Endothelial cell of umbilical vein (primary cell): ENCODE measurements at regions of chr5 and their contacts with region 1.

Region 1: GRCh38 chr5:80672140-80672736 is 17.5 kb upstream of the DHFR start:
- DNase-seq: peak; percentile 69
- H3K4me3 ChIP-seq: no peak overlapping the region
- H3K27ac ChIP-seq: no peak overlapping the region
- H3K4me1 ChIP-seq: no peaks in the 10 kb centered on the region
- H3K27me3 ChIP-seq: no peaks in the 10 kb centered on the region
- CTCF ChIP-seq: peak; percentile 70
- POLR2A ChIP-seq: no peak

Region 2: GRCh38 chr5:79284846-79285245 is 1387.4 kb before region 1 on chr5:
- CTCF ChIA-PET with region 1: no interaction called
- POLR2A ChIA-PET with region 1: no interaction called
- dilution Hi-C with region 1: no loop called
- intact Hi-C with region 1: no loop called
- DNase-seq: no peak
- H3K4me3 ChIP-seq: no peak overlapping the region
- H3K27ac ChIP-seq: no peak overlapping the region
- H3K4me1 ChIP-seq: no peaks in the 10 kb centered on the region
- H3K27me3 ChIP-seq: no peaks in the 10 kb centered on the region
- CTCF ChIP-seq: no peak
- POLR2A ChIP-seq: no peak

Region 3: DNA sequence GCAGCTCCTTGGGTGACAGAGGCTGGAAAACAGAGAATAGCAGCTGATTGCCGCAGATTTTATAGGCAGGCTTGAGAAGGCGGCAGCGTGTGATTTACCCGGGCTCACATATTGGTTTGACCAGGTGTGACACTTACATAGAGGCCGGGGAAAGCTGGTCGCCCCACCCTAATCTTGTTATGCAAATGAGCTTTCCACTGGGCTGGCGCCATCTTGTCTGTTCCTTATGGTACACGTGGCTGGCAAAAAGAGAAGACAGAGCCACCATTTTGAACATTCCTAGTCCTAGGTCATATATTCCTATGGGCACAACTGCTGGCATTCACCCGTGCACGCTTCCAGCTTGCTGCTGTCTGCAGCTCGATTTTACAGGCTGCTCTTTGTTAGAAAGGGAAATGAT is 363.7 kb before region 1 on chr5:
- CTCF ChIA-PET with region 1: interaction called, 10 read pairs
- POLR2A ChIA-PET with region 1: no interaction called
- dilution Hi-C with region 1: no loop called
- intact Hi-C with region 1: no loop called
- DNase-seq: no peak
- H3K4me3 ChIP-seq: no peak overlapping the region
- H3K27ac ChIP-seq: no peak overlapping the region
- H3K4me1 ChIP-seq: no peaks in the 10 kb centered on the region
- H3K27me3 ChIP-seq: no peaks in the 10 kb centered on the region
- CTCF ChIP-seq: no peak
- POLR2A ChIP-seq: no peak

Region 4: DNA sequence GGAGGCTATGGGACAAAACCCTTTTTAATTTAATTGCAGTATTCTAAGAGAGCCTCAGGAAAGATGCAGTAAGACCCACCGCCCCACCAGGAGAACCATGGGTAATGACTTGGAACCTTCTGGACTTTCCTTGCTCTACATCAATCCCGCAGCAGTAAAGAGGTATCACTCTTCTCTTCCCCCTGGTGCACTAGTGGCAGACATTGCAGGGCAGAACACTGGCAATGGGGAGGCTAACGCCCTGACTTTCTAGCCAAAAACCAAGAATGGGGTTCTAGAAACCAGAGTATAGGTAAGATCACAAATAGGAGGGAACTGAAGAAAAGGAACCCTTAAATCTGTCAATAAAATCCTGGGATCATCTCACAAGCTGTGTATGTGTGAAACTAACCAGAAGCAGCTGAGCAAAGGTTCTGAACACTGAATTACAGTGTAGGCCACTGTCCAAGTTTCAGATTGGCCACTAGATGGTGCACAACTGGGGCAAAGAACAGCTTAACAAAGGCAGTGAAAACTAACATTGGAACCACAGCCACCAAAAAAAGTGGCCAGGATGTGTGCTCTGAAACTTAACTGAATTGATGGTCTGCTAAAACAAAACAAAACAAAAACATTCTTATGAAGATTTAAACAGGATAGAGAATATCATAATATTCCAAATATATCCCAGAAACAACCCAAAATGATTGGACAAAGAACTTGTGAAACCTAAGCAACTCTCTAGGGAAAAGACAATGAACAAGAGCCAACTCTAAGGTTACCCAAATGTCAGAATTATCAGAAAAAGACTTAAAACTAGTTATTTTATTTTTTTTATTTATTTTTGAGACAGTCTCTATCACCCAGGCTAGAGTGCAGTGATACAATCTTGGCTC is 191.0 kb before region 1 on chr5:
- CTCF ChIA-PET with region 1: interaction called, 116 read pairs
- POLR2A ChIA-PET with region 1: no interaction called
- dilution Hi-C with region 1: no loop called
- intact Hi-C with region 1: loop called (anchors 2 kb)
- DNase-seq: peak; percentile 59
- H3K4me3 ChIP-seq: no peak overlapping the region
- H3K27ac ChIP-seq: no peak overlapping the region
- H3K4me1 ChIP-seq: no peaks in the 10 kb centered on the region
- H3K27me3 ChIP-seq: no peaks in the 10 kb centered on the region
- CTCF ChIP-seq: peak; percentile 81 to 85
- POLR2A ChIP-seq: no peak

Region 5: DNA sequence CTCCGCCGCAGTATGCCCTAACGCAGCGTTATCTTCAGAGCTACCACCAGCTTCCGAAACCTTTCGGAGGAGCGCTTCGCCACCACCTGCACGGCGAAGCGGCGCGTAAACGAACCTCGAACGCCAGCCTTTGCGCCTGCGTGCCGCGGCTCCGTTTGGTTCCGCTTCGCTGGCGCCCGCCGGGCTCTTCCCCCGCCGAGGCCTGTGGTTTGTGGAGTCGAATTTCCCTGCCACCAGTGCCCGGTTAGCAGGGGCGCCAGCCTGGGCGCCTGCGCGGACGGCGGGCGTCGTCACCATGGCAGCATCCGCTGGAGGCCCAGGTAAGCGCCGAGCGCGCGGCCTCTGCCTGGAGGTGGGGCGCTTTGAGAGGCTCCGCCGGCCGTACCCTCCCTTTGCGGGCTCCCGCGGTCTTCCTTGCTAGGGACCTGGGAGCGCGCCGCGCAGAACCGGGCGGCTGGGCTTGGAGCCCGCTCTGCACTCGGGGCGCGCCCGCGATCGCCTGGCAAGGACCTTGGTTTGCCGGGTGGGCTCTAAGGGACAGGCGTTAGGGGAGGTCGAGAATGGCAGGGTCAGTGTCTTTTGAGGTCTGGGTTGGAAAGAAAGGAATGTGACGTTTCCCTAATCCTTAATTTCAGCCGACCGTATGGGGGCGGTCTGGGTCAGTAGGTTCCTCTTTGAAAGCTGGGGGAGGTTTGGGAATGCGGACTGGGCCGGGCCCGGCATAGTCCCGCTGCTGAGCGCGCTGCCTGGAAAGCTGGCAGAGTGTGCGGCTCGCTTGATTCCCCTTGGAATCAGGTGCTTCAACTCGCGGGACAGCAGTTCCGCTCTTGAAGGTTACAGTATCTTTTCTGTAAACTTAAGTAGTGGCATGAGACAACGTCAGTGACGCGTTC is 184.2 kb before region 1 on chr5 and contains the start of gene FAM151B:
- CTCF ChIA-PET with region 1: interaction called, 116 read pairs
- POLR2A ChIA-PET with region 1: no interaction called
- dilution Hi-C with region 1: no loop called
- intact Hi-C with region 1: loop called (anchors 1 kb)
- DNase-seq: peak; percentile 93
- H3K4me3 ChIP-seq: peak within 1 kb of the TSS; percentile 55 to 76 (median 76)
- H3K27ac ChIP-seq: peak within 1 kb of the TSS; percentile 15
- H3K4me1 ChIP-seq: no peaks in the 10 kb centered on the region
- H3K27me3 ChIP-seq: no peaks in the 10 kb centered on the region
- CTCF ChIP-seq: peak in 1 of 2 donors; percentile 11
- POLR2A ChIP-seq: peak; percentile 7
- total RNA-seq, gene FAM151B: 2.0 and 2.6 TPM in 2 replicates

Region 6: DNA sequence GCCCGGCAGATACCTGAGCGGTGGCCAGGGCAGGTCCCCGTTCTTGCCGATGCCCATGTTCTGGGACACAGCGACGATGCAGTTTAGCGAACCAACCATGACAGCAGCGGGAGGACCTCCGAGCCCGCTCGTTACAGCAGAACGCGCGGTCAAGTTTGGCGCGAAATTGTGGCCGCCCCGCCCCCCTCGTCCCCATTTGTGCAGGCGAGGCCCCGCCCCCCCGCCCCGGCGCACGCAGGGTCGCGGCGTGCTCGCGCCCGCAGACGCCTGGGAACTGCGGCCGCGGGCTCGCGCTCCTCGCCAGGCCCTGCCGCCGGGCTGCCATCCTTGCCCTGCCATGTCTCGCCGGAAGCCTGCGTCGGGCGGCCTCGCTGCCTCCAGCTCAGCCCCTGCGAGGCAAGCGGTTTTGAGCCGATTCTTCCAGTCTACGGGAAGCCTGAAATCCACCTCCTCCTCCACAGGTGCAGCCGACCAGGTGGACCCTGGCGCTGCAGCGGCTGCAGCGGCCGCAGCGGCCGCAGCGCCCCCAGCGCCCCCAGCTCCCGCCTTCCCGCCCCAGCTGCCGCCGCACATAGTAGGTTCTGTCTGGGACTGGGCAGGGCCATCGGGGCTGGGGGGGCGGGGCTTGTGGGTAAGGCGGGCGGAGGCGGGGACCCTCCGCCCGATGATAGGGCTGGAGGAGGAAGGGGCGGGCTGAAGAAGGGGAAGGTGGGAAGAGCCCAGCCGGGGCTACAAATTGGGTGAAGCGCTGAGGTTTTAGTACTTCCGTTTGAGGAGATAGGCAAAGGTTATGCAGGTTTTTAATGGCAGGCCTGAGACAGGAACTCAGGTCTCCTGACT is 17.6 kb before region 1 on chr5 and contains the starts of genes DHFR and MSH3:
- CTCF ChIA-PET with region 1: interaction called, 22 read pairs
- POLR2A ChIA-PET with region 1: no interaction called
- dilution Hi-C with region 1: no loop called
- intact Hi-C with region 1: no loop called
- DNase-seq: peak; percentile 88
- H3K4me3 ChIP-seq: peak within 1 kb of the TSS; percentile 76 to 93 (median 81)
- H3K27ac ChIP-seq: peak within 1 kb of the TSS; percentile 79
- H3K4me1 ChIP-seq: peaks cover 20% of the 10 kb centered on the region
- H3K27me3 ChIP-seq: no peaks in the 10 kb centered on the region
- CTCF ChIP-seq: peak; percentile 5 to 18
- POLR2A ChIP-seq: peak; percentile 80
- total RNA-seq, gene DHFR: 32.8 and 35.8 TPM in 2 replicates
- total RNA-seq, gene MSH3: 10.5 and 13.0 TPM in 2 replicates

Region 7: GRCh38 chr5:80686757-80687156 is 14.5 kb after region 1 on chr5:
- CTCF ChIA-PET with region 1: interaction called, 15 read pairs
- POLR2A ChIA-PET with region 1: no interaction called
- dilution Hi-C with region 1: no loop called
- intact Hi-C with region 1: no loop called
- DNase-seq: peak; percentile 27
- H3K4me3 ChIP-seq: no peak overlapping the region
- H3K27ac ChIP-seq: no peak overlapping the region
- H3K4me1 ChIP-seq: no peaks in the 10 kb centered on the region
- H3K27me3 ChIP-seq: no peaks in the 10 kb centered on the region
- CTCF ChIP-seq: peak; percentile 1 to 14
- POLR2A ChIP-seq: no peak